PC-3 (cell line): ENCODE measurements at regions of chr1 and their contacts with region 1.

Region 1: DNA sequence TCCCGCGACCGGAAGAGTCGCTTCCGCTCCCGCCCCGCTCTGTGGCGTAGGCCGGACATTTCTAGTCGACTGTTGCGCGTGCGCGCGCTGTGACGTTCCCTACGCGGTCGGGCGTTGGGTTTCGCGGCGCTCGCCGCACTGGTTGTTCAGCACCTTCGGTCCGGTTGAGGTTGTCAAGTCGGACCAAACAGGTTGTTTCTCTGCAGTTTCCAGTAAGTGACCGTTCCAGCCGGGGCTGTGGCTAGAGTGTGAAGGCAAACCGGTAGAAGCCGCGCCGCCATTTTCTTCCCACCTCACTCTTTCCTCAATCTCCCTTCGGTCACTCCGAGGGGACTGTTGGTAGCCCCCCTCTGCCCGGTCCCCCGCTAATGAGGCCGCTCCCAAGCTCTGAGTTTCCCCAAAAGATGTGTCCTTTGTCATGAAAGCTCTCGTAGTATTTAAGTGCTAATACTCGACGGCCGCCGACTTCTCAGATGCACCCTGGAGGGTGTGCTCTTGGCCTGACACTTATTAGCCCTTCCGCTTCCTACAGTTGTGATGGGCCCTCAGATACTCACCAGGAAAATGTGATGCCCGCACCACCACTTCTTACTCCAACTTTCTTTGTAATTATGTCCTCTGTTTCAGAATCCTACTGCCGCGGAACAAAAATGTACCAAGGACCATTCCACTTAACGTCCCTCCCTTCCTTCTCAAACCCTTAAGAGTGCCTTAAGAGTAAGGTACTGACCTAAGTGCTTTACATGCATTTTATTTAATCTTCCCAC is 56.3 kb downstream of the TRAF5 start:
- DNase-seq: peak; percentile 97
- ATAC-seq: peak; percentile 96
- H3K4me3 ChIP-seq: peak overlapping the region; percentile 86
- H3K27ac ChIP-seq: peak overlapping the region; percentile 77
- H3K4me1 ChIP-seq: peaks cover 25% of the 10 kb centered on the region
- H3K27me3 ChIP-seq: no peaks in the 10 kb centered on the region
- CTCF ChIP-seq: no peak

Region 2: GRCh38 chr1:211258756-211259637 is 123.9 kb before region 1 on chr1 and contains the start of gene RCOR3:
- CTCF ChIA-PET with region 1: no interaction called
- POLR2A ChIA-PET with region 1: no interaction called
- intact Hi-C with region 1: loop called (anchors 2 kb)
- DNase-seq: peak; percentile 89
- ATAC-seq: peak; percentile 70
- H3K4me3 ChIP-seq: peak within 1 kb of the TSS; percentile 98
- H3K27ac ChIP-seq: peak within 1 kb of the TSS; percentile 77
- H3K4me1 ChIP-seq: peaks cover 17% of the 10 kb centered on the region
- H3K27me3 ChIP-seq: no peaks in the 10 kb centered on the region
- CTCF ChIP-seq: peak; percentile 51
- total RNA-seq, gene RCOR3: 12.7 and 20.4 TPM in 2 replicates

Region 3: GRCh38 chr1:211469938-211470529 is 87.1 kb after region 1 on chr1:
- CTCF ChIA-PET with region 1: no interaction called
- POLR2A ChIA-PET with region 1: no interaction called
- intact Hi-C with region 1: no loop called
- DNase-seq: peak; percentile 87
- ATAC-seq: peak; percentile 99
- H3K4me3 ChIP-seq: no peak overlapping the region
- H3K27ac ChIP-seq: no peak overlapping the region
- H3K4me1 ChIP-seq: peaks cover 2% of the 10 kb centered on the region; the same call in 1 of the 2 replicates
- H3K27me3 ChIP-seq: peaks cover 13% of the 10 kb centered on the region
- CTCF ChIP-seq: peak; percentile 96